ENCODE measurements at regions of chr1 and their contacts with region 1.

Region 1: DNA sequence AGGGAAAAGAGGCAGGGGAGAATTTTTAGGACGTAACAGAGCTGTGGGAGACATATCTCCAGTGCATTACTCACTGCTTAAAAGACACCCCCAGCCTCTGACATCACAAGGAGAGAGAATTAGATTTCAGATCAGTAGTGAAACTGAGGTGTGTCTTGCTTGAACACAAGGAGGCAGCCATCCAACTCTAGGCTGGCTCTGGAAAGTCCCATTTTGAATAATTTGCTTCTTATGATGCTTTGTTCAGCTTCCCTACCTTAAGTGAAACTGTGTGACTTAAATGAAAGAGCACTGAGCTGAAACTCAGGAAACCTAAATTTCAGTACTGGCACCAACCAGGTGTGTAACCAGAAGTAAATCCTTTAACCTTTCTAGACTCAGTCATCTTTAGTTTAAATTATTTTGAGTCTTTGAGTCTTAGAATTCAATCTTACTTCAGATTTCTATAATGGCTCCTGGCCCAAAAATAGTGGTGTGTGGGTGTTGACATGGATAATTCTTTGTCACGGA is 251.6 kb upstream of the SGIP1 start:
- DNase-seq: peak in 8 of 9 donors; percentile 49 to 88 (median 68)
- ATAC-seq: peak; percentile 95
- H3K4me3 ChIP-seq: no peak overlapping the region
- H3K4me3 Mint-ChIP-seq: peak overlapping the region in 4 of 10 donors; percentile 12 to 57 (median 25)
- H3K27ac ChIP-seq: peak overlapping the region; percentile 64
- H3K27ac Mint-ChIP-seq: peak overlapping the region; percentile 70 to 93 (median 85)
- H3K4me1 ChIP-seq: peaks cover 49 to 59% of the 10 kb centered on the region in 2 donors
- H3K4me1 Mint-ChIP-seq: peaks cover 57 to 98% (median 89%) of the 10 kb centered on the region in 7 donors
- H3K27me3 ChIP-seq: no peaks in the 10 kb centered on the region
- H3K27me3 Mint-ChIP-seq: no peaks in the 10 kb centered on the region

Region 2: GRCh38 chr1:66242646-66243547 is 39.5 kb before region 1 on chr1:
- CTCF ChIA-PET with region 1: interaction called, 5 read pairs
- POLR2A ChIA-PET with region 1: no interaction called
- intact Hi-C with region 1: loop called in 1 of 2 experiments (anchors 2 kb)
- DNase-seq: peak; percentile 43 to 75 (median 65)
- ATAC-seq: peak; percentile 93
- H3K4me3 ChIP-seq: no peak overlapping the region
- H3K4me3 Mint-ChIP-seq: no peak overlapping the region
- H3K27ac ChIP-seq: no peak overlapping the region
- H3K27ac Mint-ChIP-seq: no peak overlapping the region
- H3K4me1 ChIP-seq: peaks cover 17 to 36% of the 10 kb centered on the region in 2 donors
- H3K4me1 Mint-ChIP-seq: peaks cover 7 to 31% (median 15%) of the 10 kb centered on the region in 7 donors
- H3K27me3 ChIP-seq: no peaks in the 10 kb centered on the region
- H3K27me3 Mint-ChIP-seq: peaks cover 6 to 7% (median 6%) of the 10 kb centered on the region in 5 donors

Region 3: GRCh38 chr1:66262211-66262963 is 20.0 kb before region 1 on chr1:
- CTCF ChIA-PET with region 1: interaction called, 5 read pairs
- POLR2A ChIA-PET with region 1: interaction called, 3 read pairs
- intact Hi-C with region 1: loop called in 1 of 2 experiments (anchors 1 kb)
- DNase-seq: no peak
- ATAC-seq: no peak
- H3K4me3 ChIP-seq: no peak overlapping the region
- H3K4me3 Mint-ChIP-seq: peak overlapping the region in 2 of 10 donors; percentile 60 to 73
- H3K27ac ChIP-seq: no peak overlapping the region
- H3K27ac Mint-ChIP-seq: peak overlapping the region in 2 of 9 donors; percentile 16 to 39
- H3K4me1 ChIP-seq: peaks cover 0 to 19% of the 10 kb centered on the region in 2 donors
- H3K4me1 Mint-ChIP-seq: peaks cover 15 to 69% (median 37%) of the 10 kb centered on the region in 7 donors
- H3K27me3 ChIP-seq: no peaks in the 10 kb centered on the region
- H3K27me3 Mint-ChIP-seq: no peaks in the 10 kb centered on the region

Region 4: DNA sequence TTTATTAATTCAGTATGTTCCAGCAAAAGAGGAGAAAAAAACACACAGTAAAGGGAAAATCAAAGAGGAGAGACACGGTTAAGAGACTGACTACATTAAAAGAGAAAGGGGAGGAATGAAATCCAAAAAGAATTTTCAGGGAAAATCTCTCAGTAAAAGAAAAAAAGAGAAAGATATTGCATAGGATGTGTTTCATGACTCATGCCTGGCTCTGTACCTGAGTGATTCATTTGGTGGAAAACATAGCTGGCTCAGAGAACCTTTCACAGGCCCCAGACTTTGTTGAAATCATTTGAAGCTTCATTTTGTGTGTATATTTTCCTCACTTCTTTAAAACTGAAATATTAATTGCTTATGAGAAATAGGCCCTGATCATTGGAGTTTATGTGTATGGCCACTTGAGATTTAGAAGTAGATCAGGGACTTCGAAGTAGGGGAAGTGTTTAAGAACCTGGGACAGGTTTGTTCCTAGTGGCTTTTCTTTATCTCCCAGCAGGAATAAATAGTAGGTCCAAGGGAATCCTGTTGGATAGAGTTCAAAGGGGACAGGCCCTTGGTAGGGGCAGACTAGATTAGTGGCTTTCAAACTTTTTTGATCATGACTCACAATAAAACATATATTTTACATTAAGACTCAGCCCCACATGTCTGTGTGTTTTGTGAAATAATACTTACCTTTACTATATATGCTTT is 12.4 kb after region 1 on chr1:
- CTCF ChIA-PET with region 1: interaction called, 6 read pairs
- POLR2A ChIA-PET with region 1: interaction called, 7 read pairs
- intact Hi-C with region 1: loop called in 1 of 2 experiments (anchors 1 kb)
- DNase-seq: no peak
- ATAC-seq: no peak
- H3K4me3 ChIP-seq: no peak overlapping the region
- H3K4me3 Mint-ChIP-seq: no peak overlapping the region
- H3K27ac ChIP-seq: no peak overlapping the region
- H3K27ac Mint-ChIP-seq: peak overlapping the region in 1 of 9 donors; percentile 73
- H3K4me1 ChIP-seq: no peaks in the 10 kb centered on the region
- H3K4me1 Mint-ChIP-seq: peaks cover 4 to 34% (median 17%) of the 10 kb centered on the region in 7 donors
- H3K27me3 ChIP-seq: no peaks in the 10 kb centered on the region
- H3K27me3 Mint-ChIP-seq: peaks cover 0 to 3% (median 0%) of the 10 kb centered on the region in 5 donors

Region 5: DNA sequence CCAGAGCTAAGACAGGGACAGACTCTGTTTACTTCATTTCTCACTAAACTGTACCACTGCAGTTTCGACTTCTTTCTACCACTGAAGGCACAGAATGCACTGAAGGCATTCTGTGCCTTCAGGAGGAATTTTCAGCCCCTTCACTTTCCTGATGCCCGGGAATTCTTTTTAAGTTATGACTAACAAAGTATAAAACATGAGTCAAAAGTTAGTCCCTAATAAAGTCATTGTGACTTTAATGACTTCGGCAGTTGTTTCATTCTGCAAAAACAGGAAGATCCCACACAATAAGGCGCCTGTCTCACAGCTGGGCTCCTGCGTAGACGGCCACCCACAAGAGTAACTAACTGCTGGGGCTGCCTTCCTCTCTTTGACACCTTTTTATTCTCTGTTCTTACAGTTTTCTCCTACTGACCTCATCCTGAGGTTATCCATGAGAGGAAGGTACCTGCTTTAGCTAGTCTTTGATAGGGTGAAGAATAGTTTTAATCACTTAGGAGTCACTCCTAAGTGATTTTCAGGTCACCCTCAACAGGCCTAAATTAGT is 67.7 kb after region 1 on chr1:
- CTCF ChIA-PET with region 1: interaction called, 5 read pairs
- POLR2A ChIA-PET with region 1: interaction called, 3 read pairs
- intact Hi-C with region 1: loop called (anchors 1 kb)
- DNase-seq: peak in 7 of 9 donors; percentile 55 to 77 (median 71)
- ATAC-seq: peak; percentile 84
- H3K4me3 ChIP-seq: peak overlapping the region; percentile 33
- H3K4me3 Mint-ChIP-seq: peak overlapping the region; percentile 70 to 86 (median 77)
- H3K27ac ChIP-seq: peak overlapping the region; percentile 62
- H3K27ac Mint-ChIP-seq: peak overlapping the region; percentile 81 to 95 (median 90)
- H3K4me1 ChIP-seq: peaks cover 74 to 78% of the 10 kb centered on the region in 2 donors
- H3K4me1 Mint-ChIP-seq: peaks cover 66 to 100% (median 96%) of the 10 kb centered on the region in 7 donors
- H3K27me3 ChIP-seq: no peaks in the 10 kb centered on the region
- H3K27me3 Mint-ChIP-seq: no peaks in the 10 kb centered on the region

Region 6: DNA sequence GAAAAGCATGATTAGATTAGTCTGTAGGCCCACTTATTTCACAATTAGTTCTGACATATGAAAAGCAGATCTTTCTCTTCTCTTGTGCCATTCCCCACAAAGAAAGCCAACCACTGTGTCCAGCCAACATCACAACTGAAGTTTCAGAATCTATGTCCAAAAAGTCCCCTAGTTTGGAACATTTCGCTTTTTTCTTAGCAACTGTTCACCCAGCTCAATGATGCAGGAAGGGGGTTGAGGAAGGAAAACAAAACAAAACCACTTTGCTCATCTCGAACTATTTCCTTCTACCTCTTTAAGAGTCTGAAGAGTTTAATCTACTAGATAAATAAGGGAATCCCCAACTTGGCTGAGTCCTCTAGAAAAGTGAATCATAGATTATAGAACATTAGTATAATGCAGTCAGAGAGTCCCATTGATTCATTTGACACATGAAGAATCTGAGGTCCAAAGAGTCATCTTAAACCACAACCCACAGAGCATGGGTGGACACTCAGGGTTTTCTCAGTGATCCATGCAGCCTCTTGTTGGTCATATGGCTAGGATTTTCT is 92.2 kb after region 1 on chr1:
- CTCF ChIA-PET with region 1: interaction called, 3 read pairs
- POLR2A ChIA-PET with region 1: no interaction called
- intact Hi-C with region 1: loop called in 1 of 2 experiments (anchors 2 kb)
- DNase-seq: peak in 7 of 9 donors; percentile 27 to 49 (median 40)
- ATAC-seq: peak; percentile 83
- H3K4me3 ChIP-seq: no peak overlapping the region
- H3K4me3 Mint-ChIP-seq: peak overlapping the region in 9 of 10 donors; percentile 46 to 83 (median 67)
- H3K27ac ChIP-seq: peak overlapping the region; percentile 62
- H3K27ac Mint-ChIP-seq: peak overlapping the region; percentile 88 to 96 (median 92)
- H3K4me1 ChIP-seq: peaks cover 51 to 53% of the 10 kb centered on the region in 2 donors
- H3K4me1 Mint-ChIP-seq: peaks cover 52 to 74% (median 65%) of the 10 kb centered on the region in 7 donors
- H3K27me3 ChIP-seq: no peaks in the 10 kb centered on the region
- H3K27me3 Mint-ChIP-seq: no peaks in the 10 kb centered on the region

Region 7: DNA sequence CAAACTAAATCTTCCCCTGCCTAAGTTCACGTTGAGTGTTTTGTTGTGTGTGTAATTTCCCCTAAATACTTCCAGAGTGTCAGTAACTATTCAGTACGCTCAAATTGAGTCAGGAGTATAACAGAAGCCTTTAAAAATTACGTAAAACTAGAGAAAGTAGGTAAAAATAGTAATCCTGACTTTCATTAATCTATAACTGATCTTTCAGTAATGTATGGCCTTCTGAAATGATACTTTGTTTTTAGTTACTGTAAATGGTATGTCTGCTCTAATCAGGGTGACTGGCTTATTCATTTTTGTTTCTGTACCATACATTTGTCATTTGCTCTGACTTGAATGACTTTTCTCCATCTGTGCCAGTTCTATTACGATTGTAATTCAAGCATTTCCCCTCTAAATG is 671.8 kb after region 1 on chr1:
- CTCF ChIA-PET with region 1: no interaction called
- POLR2A ChIA-PET with region 1: no interaction called
- intact Hi-C with region 1: no loop called
- DNase-seq: no peak
- ATAC-seq: no peak
- H3K4me3 ChIP-seq: no peak overlapping the region
- H3K4me3 Mint-ChIP-seq: no peak overlapping the region
- H3K27ac ChIP-seq: no peak overlapping the region
- H3K27ac Mint-ChIP-seq: peak overlapping the region in 6 of 9 donors; percentile 3 to 83 (median 62)
- H3K4me1 ChIP-seq: no peaks in the 10 kb centered on the region
- H3K4me1 Mint-ChIP-seq: peaks cover 9 to 73% (median 56%) of the 10 kb centered on the region in 7 donors
- H3K27me3 ChIP-seq: no peaks in the 10 kb centered on the region
- H3K27me3 Mint-ChIP-seq: no peaks in the 10 kb centered on the region